ENCODE measurements at regions of chr4 and their contacts with region 1.

Region 1: GRCh38 chr4:38948551-38948950 is 80.9 kb downstream of the FAM114A1 start:
- DNase-seq: peak in 1 of 5 donors; percentile 32
- ATAC-seq: peak; percentile 32 to 86 (median 68)
- H3K4me3 ChIP-seq: no peak overlapping the region
- H3K27ac ChIP-seq: peak overlapping the region in 1 of 12 donors; percentile 80
- H3K4me1 ChIP-seq: peaks cover 0 to 14% (median 0%) of the 10 kb centered on the region in 12 donors
- H3K27me3 ChIP-seq: no peaks in the 10 kb centered on the region
- CTCF ChIP-seq: no peak
- POLR2A ChIP-seq: no peak

Region 2: GRCh38 chr4:39004758-39005157 is 56.2 kb after region 1 on chr4:
- intact Hi-C with region 1: loop called in 1 of 10 experiments (anchors 2 kb)
- DNase-seq: no peak
- ATAC-seq: no peak
- H3K4me3 ChIP-seq: no peak overlapping the region
- H3K27ac ChIP-seq: no peak overlapping the region
- H3K4me1 ChIP-seq: no peaks in the 10 kb centered on the region
- H3K27me3 ChIP-seq: no peaks in the 10 kb centered on the region
- CTCF ChIP-seq: no peak
- POLR2A ChIP-seq: no peak

Region 3: DNA sequence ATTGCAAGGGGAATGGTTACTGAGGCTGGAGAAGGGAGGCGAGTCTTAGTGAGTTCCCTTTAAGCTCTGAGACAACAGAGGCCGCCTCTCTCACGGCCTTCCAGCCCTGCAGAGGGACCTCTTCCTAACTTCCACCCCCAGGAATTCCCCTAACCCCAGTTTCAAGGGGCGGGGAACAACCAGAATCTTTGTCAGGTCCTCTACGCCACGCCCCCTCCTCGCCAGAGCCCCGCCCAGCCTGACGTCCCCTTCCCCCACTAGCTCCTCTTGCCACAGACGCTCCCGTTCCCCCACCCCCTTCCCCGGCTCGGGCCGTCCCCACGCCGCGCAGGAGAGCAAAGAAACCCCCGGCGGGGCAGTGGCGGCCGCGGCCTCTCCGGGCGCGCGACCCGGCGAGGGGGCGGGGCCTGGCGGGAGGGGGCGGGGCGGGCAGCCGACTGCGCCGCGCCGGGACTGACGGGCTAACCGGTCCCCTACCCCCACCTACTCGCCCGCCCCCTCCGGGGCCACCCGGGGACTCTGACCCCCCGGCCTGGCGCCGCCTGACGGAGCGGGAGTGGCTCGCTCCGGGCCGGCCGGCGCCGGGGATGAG is 95.9 kb after region 1 on chr4:
- intact Hi-C with region 1: loop called in 2 of 10 experiments (anchors 10 kb)
- DNase-seq: peak; percentile 94 to 96 (median 95)
- ATAC-seq: peak; percentile 89 to 95 (median 93)
- H3K4me3 ChIP-seq: peak overlapping the region; percentile 49 to 94 (median 77)
- H3K27ac ChIP-seq: peak overlapping the region; percentile 81 to 97 (median 93)
- H3K4me1 ChIP-seq: peaks cover 0 to 56% (median 20%) of the 10 kb centered on the region in 12 donors
- H3K27me3 ChIP-seq: no peaks in the 10 kb centered on the region
- CTCF ChIP-seq: no peak
- POLR2A ChIP-seq: peak in 1 of 2 donors; percentile 21

Region 4: DNA sequence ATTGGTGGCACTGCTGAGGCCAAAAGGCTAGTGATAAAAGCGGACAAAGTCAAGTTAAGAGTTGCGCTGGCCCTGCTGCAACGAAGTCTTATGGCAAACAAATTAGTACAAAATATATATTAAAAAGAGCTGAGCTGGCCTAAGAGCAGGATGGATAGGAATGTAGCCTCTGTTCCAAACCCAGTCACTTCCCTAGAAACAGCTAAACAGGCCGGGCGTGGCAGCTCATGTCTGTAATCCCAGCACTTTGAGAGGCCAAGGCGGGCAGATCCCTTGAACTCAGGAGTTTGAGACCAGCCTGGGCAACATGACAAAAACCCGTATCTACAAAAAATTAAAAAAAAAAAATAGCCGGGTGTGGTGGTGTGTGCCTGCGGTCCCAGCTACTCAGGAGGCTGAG is 611.1 kb after region 1 on chr4:
- intact Hi-C with region 1: no loop called
- DNase-seq: no peak
- ATAC-seq: no peak
- H3K4me3 ChIP-seq: no peak overlapping the region
- H3K27ac ChIP-seq: peak overlapping the region in 2 of 12 donors; percentile 9 to 44
- H3K4me1 ChIP-seq: peaks cover 0 to 11% (median 0%) of the 10 kb centered on the region in 12 donors
- H3K27me3 ChIP-seq: no peaks in the 10 kb centered on the region
- CTCF ChIP-seq: no peak
- POLR2A ChIP-seq: no peak

Measured in heart left ventricle (tissue), 16 donors.